ENCODE measurements at regions of chr4 and their contacts with region 1.

Region 1: DNA sequence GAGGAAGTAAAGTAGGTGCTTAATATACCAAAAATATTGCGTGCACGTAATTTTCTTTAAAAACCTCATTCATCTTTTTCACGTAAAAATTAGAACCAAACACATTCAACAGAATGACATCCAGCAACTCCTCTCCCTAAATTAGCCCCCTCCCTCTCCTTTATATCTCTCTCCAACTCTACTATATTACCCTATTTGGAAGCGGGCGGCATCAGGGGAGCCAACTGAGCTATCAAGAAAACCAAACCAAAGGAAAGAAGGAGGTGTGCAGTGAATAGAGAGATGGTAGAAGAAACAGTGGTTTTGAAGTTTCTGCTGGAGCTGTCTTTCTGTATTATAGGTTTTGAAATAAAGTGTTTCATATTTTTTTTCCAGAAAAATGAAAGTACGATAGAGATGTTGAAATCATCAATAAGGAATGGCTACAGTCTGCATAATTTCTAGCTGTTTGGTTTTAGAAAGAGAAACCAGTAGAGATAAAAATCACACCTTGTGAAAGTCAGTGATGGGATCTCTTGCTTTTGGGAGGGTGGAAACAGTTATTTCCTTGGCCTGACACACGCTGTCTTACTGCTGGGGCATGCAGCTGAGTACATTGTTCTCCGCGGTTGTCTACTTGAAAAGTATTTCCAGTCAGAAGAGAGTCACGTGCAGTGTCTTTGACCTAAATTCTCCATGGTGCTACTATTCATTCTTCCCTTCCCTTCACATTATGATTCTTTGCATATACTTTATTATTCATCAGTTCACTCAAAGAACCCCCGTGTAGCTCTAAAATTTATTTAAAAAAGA is 94.1 kb upstream of the WDR17 start:
- DNase-seq: no peak
- H3K4me3 ChIP-seq: peak overlapping the region; percentile 17 to 44 (median 32)
- H3K27ac ChIP-seq: peak overlapping the region; percentile 75 to 82 (median 78)
- H3K4me1 ChIP-seq: peaks cover 0 to 35% (median 12%) of the 10 kb centered on the region in 4 donors
- H3K27me3 ChIP-seq: no peaks in the 10 kb centered on the region
- CTCF ChIP-seq: no peak
- EP300 ChIP-seq: no peak
- POLR2A ChIP-seq: no peak

Region 2: GRCh38 chr4:176002007-176002613 is 30.5 kb after region 1 on chr4:
- intact Hi-C with region 1: loop called (anchors 2 kb)
- DNase-seq: peak; percentile 74
- H3K4me3 ChIP-seq: peak overlapping the region; percentile 68 to 75 (median 73)
- H3K27ac ChIP-seq: peak overlapping the region; percentile 82 to 89 (median 86)
- H3K4me1 ChIP-seq: peaks cover 0 to 22% (median 17%) of the 10 kb centered on the region in 4 donors
- H3K27me3 ChIP-seq: no peaks in the 10 kb centered on the region
- CTCF ChIP-seq: no peak
- EP300 ChIP-seq: no peak
- POLR2A ChIP-seq: peak in 1 of 2 donors; percentile 23

Measured in sigmoid colon (tissue), 7 donors.